ENCODE measurements at regions of chr10 and their contacts with region 1.

Region 1: DNA sequence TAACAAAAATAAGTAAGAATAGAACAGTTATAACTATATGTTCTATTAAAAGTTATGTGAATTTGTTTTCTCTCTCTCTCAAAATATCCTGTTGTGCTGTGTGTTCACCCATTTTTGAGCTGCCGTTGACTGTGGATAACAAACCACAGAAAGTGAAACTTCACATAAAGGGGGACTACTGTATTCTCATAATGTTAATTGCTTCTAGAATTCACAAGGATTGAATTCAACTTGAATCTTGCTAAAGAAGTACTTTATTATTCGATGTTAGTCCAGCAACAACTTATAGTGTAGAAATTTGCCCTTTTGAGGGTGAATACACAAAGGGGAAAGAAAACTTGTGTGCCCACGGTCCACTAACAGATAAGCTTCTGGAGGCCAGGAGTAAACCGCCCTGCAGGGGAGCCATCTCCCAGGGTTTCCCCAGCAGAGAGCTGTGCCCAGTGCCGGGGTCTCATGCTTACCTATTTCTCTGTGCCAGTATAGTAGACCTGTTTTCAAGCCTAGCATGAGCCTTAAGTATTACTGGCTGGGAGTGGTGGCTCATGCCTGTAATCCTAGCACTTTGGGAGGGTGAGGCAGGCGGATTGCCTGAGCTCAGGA is 87.1 kb downstream of the KAT6B start:
- DNase-seq: peak in 1 of 9 experiments; percentile 23
- ATAC-seq: peak; percentile 46
- H3K4me3 ChIP-seq: no peak overlapping the region
- H3K4me3 Mint-ChIP-seq: peak overlapping the region; percentile 55
- H3K27ac ChIP-seq: no peak overlapping the region
- H3K27ac Mint-ChIP-seq: peak overlapping the region; percentile 5
- H3K4me1 ChIP-seq: peaks cover 23% of the 10 kb centered on the region
- H3K4me1 Mint-ChIP-seq: peaks cover 57% of the 10 kb centered on the region
- H3K27me3 ChIP-seq: no peaks in the 10 kb centered on the region
- H3K27me3 Mint-ChIP-seq: no peaks in the 10 kb centered on the region
- CTCF ChIP-seq: no peak

Region 2: GRCh38 chr10:74558403-74558802 is 355.1 kb before region 1 on chr10:
- CTCF ChIA-PET with region 1: no interaction called
- POLR2A ChIA-PET with region 1: no interaction called
- intact Hi-C with region 1: no loop called
- DNase-seq: no peak
- ATAC-seq: no peak
- H3K4me3 ChIP-seq: no peak overlapping the region
- H3K4me3 Mint-ChIP-seq: no peak overlapping the region
- H3K27ac ChIP-seq: no peak overlapping the region
- H3K27ac Mint-ChIP-seq: no peak overlapping the region
- H3K4me1 ChIP-seq: no peaks in the 10 kb centered on the region
- H3K4me1 Mint-ChIP-seq: no peaks in the 10 kb centered on the region
- H3K27me3 ChIP-seq: no peaks in the 10 kb centered on the region
- H3K27me3 Mint-ChIP-seq: no peaks in the 10 kb centered on the region
- CTCF ChIP-seq: no peak

Region 3: DNA sequence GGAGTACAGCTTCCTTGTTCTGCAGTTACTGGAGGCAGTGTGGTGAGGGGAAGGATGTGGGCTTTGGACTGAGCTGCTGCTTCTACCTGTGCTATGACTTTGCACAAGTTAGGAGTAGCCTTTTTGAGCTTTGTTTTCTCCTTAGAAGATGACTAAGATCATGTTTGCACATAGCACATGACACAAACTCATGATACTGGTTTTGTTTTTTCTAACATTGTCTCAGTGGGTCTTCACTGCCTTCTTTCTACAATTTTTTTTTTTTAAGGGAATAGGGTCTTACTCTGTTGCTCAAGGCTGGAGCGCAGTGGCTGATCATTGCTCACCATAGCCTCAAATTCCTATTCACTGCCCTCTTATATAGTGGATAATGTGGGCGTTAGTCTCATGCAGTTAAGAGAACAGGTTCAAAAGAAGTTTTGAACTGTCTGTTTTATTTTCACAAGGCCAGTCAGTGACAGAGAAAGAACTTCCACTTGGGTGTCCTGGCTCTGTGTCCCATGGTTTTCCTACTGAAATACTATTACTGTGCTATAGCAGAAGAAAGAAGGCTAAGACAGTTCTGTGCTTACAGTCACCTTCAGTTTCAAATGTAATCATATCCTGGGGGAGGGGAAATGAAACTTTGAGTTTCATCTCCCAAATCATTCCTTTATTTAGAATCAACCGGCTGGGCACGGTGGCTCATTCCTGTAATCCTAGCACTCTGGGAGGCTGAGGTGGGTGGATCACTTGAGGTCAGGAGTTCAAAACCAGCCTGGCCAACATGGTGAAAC is 15.1 kb before region 1 on chr10:
- CTCF ChIA-PET with region 1: no interaction called
- POLR2A ChIA-PET with region 1: interaction called, 6 read pairs
- intact Hi-C with region 1: loop called in 1 of 2 experiments (anchors 2 kb)
- DNase-seq: peak in 3 of 9 experiments; percentile 16 to 40 (median 17)
- ATAC-seq: peak; percentile 60
- H3K4me3 ChIP-seq: no peak overlapping the region
- H3K4me3 Mint-ChIP-seq: peak overlapping the region; percentile 8
- H3K27ac ChIP-seq: peak overlapping the region in 1 of 2 experiments; percentile 57
- H3K27ac Mint-ChIP-seq: peak overlapping the region; percentile 68
- H3K4me1 ChIP-seq: peaks cover 39% of the 10 kb centered on the region
- H3K4me1 Mint-ChIP-seq: peaks cover 78% of the 10 kb centered on the region
- H3K27me3 ChIP-seq: no peaks in the 10 kb centered on the region
- H3K27me3 Mint-ChIP-seq: no peaks in the 10 kb centered on the region
- CTCF ChIP-seq: no peak

Region 4: DNA sequence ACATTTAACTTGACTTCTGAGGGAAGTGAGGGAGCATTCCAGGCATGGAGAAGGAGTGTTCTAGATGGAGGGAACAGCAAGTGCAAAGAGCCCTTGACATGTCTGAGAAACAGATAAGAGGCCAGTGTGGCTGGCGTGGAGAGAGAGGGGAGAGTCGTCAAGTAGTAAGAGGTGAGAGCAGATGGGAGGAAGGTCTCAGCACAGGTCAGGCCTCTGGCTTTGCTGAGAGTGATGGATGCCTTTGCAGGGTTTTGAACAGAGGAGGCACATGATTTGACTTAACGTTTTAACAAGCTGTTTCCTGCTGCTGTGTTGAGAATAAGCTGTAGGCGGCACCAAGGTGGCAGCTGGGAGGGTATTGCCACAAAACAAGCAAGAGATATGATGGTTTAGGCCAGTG is 10.1 kb after region 1 on chr10:
- CTCF ChIA-PET with region 1: no interaction called
- POLR2A ChIA-PET with region 1: interaction called, 6 read pairs
- intact Hi-C with region 1: loop called in 1 of 2 experiments (anchors 2 kb)
- DNase-seq: peak in 3 of 9 experiments; percentile 11 to 39 (median 23)
- ATAC-seq: peak; percentile 26
- H3K4me3 ChIP-seq: no peak overlapping the region
- H3K4me3 Mint-ChIP-seq: no peak overlapping the region
- H3K27ac ChIP-seq: no peak overlapping the region
- H3K27ac Mint-ChIP-seq: peak overlapping the region; percentile 24
- H3K4me1 ChIP-seq: peaks cover 10% of the 10 kb centered on the region
- H3K4me1 Mint-ChIP-seq: peaks cover 64% of the 10 kb centered on the region
- H3K27me3 ChIP-seq: no peaks in the 10 kb centered on the region
- H3K27me3 Mint-ChIP-seq: no peaks in the 10 kb centered on the region
- CTCF ChIP-seq: no peak